ENCODE measurements at regions of chr12 and their contacts with region 1.

Region 1: GRCh38 chr12:105384916-105385535 is 54.5 kb downstream of the C12orf75 start:
- DNase-seq: no peak
- ATAC-seq: no peak
- H3K4me3 ChIP-seq: no peak overlapping the region
- H3K27ac ChIP-seq: no peak overlapping the region
- H3K4me1 ChIP-seq: no peaks in the 10 kb centered on the region
- H3K27me3 ChIP-seq: no peaks in the 10 kb centered on the region
- CTCF ChIP-seq: no peak

Region 2: GRCh38 chr12:105279460-105280056 is 105.5 kb before region 1 on chr12:
- intact Hi-C with region 1: loop called in 1 of 2 experiments (anchors 5 kb)
- DNase-seq: peak in 1 of 4 donors; percentile 7
- ATAC-seq: peak; percentile 79
- H3K4me3 ChIP-seq: no peak overlapping the region
- H3K27ac ChIP-seq: no peak overlapping the region
- H3K4me1 ChIP-seq: no peaks in the 10 kb centered on the region
- H3K27me3 ChIP-seq: no peaks in the 10 kb centered on the region
- CTCF ChIP-seq: peak; percentile 64 to 65

Region 3: DNA sequence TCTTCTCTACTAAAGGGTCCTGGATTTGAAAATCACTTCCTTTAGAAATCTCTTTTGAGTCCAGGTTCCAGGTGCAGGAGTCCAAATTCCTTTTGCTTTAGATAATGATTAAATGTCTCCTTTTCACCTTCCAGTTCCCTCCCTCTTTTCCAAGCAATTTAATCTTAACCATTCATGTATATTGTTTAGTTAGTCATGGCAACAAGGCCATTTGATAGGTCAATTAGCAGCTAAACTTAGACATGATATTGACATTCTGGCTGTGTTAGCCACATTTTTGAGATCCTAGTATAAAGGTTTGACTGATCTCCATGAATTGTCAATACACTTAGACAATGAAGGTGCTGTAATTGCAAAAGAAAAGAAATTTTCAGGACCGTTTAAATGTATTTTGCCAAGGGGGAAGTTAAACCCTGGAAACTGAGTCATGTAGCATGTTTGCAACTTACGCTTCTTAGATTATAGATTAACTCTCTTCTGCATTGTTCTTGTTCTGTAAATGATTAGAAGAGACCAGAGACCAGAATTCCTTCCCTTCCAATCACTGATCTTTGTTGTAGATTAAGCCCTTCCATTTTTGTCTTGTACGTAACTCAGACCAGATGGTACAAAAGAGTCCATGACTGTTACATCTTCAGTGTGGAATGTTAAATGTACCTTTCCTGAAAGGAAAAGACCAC is 66.9 kb before region 1 on chr12:
- intact Hi-C with region 1: no loop called
- DNase-seq: no peak
- ATAC-seq: peak; percentile 34
- H3K4me3 ChIP-seq: no peak overlapping the region
- H3K27ac ChIP-seq: no peak overlapping the region
- H3K4me1 ChIP-seq: no peaks in the 10 kb centered on the region
- H3K27me3 ChIP-seq: no peaks in the 10 kb centered on the region
- CTCF ChIP-seq: no peak

Measured in left lung (tissue), 14 donors.